Activated B cell treated with CpG ODN at 0.5 μM for 24 hours (primary cell): ENCODE measurements at regions of chr11 and their contacts with region 1.

Region 1: GRCh38 chr11:67401495-67402191 is at the start of gene PPP1CA:
- DNase-seq: peak; percentile 96
- ATAC-seq: peak; percentile 72
- H3K4me3 Mint-ChIP-seq: peak within 1 kb of the TSS; percentile 86
- H3K27ac Mint-ChIP-seq: peak within 1 kb of the TSS; percentile 91
- H3K4me1 Mint-ChIP-seq: peaks cover 77% of the 10 kb centered on the region
- H3K27me3 Mint-ChIP-seq: no peaks in the 10 kb centered on the region
- CTCF ChIP-seq: no peak
- total RNA-seq, gene PPP1CA: 349 and 354 TPM in 2 replicates

Region 2: DNA sequence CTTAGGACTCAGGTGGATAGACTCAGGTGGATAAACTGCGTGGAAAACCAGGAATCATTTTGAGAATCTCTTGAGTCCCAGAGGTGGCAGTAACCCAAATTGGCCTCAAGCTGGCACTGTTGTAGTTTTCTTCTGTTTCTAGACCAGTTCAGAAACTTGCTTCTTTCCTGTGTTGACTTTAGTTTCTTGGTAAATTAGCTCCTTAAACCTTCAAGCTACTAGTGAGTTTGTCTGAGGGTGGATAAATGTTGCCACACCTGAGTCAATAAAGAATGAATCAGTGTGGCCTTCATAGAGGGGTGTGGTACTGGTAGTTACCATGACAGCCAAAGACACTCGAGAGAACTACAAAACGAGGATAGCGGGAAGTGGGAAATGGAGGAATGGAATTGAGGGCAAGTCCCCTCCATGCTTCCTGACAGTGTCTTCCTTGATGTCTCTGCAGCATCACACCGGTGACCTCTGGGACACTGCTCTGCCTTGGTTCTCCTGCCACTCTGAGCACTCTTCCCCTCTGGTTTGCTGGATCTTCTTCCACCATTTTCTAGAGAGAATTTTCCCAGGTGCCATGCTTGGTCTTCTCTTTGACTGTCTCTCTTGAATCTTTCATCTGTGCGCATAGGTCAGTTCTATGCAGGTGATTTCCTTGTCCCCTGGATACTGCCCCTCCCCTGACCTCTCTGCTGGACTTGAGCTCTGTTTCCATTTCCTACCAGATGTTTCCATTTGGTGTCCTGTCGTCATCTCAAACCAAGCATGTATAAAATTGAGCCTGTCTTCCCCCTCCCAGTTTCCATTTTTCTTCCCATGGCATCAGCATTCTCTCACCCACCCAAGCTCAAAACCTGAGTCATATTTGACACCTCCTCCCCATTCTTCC is 55.5 kb before region 1 on chr11:
- CTCF ChIA-PET with region 1: interaction called, 8 read pairs
- POLR2A ChIA-PET with region 1: interaction called, 99 read pairs
- intact Hi-C with region 1: no loop called
- DNase-seq: no peak
- ATAC-seq: peak; percentile 46
- H3K4me3 Mint-ChIP-seq: no peak overlapping the region
- H3K27ac Mint-ChIP-seq: peak overlapping the region; percentile 88
- H3K4me1 Mint-ChIP-seq: peaks cover 71% of the 10 kb centered on the region
- H3K27me3 Mint-ChIP-seq: no peaks in the 10 kb centered on the region
- CTCF ChIP-seq: no peak

Region 3: DNA sequence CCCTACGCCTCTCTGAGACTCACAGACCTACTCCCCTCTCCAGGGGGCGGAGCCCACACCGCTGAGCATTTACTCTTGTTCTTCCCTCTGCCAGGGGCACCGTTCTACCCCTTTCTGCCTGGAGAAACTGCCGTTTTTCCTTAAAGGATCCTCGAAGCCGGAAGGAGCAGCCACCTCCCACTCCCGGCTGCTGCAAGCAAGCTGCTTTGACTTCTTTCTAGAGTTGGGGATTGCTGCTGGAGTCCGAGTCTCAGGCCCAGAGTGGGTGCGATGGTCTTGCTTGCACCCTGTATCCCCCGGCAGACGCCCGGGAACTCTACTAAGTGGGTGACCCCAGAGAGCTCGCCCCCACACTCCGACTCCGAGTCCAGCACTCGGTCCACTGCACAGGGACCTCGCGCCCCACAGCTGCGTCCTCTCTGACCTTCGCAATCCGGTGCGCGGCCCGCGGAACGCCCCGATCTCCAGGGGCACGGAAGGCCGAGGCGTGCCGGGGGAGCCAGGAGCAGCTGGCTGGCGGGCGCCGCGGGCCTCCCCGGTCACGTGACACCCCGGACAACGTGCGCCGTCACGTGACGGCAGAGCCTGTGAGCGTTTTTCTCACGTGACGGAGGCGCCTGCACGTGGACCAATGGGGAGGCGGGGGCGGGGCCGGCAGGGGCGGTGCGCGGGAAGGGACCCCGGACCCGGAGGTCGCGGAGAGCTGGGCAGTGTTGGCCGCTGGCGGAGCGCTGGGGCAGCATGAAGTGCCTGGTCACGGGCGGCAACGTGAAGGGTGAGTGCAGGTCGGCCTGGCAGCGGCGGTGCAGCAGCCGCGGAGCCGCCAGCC is 10.1 kb before region 1 on chr11 and contains the start of gene RAD9A:
- CTCF ChIA-PET with region 1: interaction called, 11 read pairs
- POLR2A ChIA-PET with region 1: interaction called, 100 read pairs
- intact Hi-C with region 1: loop called (anchors 1 kb)
- DNase-seq: peak; percentile 85
- ATAC-seq: peak; percentile 79
- H3K4me3 Mint-ChIP-seq: peak within 1 kb of the TSS; percentile 89
- H3K27ac Mint-ChIP-seq: peak within 1 kb of the TSS; percentile 80
- H3K4me1 Mint-ChIP-seq: peaks cover 40% of the 10 kb centered on the region
- H3K27me3 Mint-ChIP-seq: no peaks in the 10 kb centered on the region
- CTCF ChIP-seq: no peak
- total RNA-seq, gene RAD9A: 30.4 and 35.2 TPM in 2 replicates

Region 4: DNA sequence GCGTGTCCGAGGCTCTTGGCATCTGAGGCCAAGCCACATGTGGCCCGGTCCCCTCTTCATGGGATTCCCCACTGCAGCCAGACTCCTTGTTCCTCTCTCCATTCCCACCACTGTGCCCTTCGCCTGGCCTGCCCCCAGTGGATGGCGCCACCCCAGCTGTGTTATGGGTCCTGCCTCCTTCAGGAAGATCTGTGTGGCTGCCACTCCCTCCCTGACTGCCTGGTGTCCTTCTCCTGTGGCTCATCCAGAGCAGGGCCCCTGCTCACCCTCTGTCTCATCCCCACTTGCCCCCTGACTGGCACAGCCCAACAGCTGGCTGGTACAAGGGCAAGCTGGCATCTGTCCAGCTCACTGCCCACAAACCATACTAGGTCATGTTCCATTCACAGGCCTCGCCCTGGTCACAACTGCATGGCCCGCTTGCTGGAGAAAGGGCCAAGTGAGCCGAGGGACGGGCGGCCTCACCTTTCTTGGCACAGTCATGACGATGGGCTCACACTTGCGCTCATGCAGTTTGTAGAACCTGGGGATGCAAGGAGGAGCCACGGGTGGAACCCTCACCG is 37.8 kb after region 1 on chr11:
- CTCF ChIA-PET with region 1: interaction called, 25 read pairs
- POLR2A ChIA-PET with region 1: interaction called, 693 read pairs
- intact Hi-C with region 1: loop called (anchors 1 kb)
- DNase-seq: peak; percentile 26
- ATAC-seq: no peak
- H3K4me3 Mint-ChIP-seq: peak overlapping the region; percentile 96
- H3K27ac Mint-ChIP-seq: peak overlapping the region; percentile 88
- H3K4me1 Mint-ChIP-seq: peaks cover 76% of the 10 kb centered on the region
- H3K27me3 Mint-ChIP-seq: no peaks in the 10 kb centered on the region
- CTCF ChIP-seq: no peak

Region 5: GRCh38 chr11:67482825-67483798 is 81.5 kb after region 1 on chr11 and contains the start of gene AIP:
- CTCF ChIA-PET with region 1: interaction called, 9 read pairs
- POLR2A ChIA-PET with region 1: interaction called, 57 read pairs
- intact Hi-C with region 1: loop called (anchors 2 kb)
- DNase-seq: peak; percentile 87
- ATAC-seq: peak; percentile 85
- H3K4me3 Mint-ChIP-seq: peak within 1 kb of the TSS; percentile 93
- H3K27ac Mint-ChIP-seq: peak within 1 kb of the TSS; percentile 98
- H3K4me1 Mint-ChIP-seq: peaks cover 58% of the 10 kb centered on the region
- H3K27me3 Mint-ChIP-seq: no peaks in the 10 kb centered on the region
- CTCF ChIP-seq: no peak
- total RNA-seq, gene AIP: 108 and 114 TPM in 2 replicates

Region 6: DNA sequence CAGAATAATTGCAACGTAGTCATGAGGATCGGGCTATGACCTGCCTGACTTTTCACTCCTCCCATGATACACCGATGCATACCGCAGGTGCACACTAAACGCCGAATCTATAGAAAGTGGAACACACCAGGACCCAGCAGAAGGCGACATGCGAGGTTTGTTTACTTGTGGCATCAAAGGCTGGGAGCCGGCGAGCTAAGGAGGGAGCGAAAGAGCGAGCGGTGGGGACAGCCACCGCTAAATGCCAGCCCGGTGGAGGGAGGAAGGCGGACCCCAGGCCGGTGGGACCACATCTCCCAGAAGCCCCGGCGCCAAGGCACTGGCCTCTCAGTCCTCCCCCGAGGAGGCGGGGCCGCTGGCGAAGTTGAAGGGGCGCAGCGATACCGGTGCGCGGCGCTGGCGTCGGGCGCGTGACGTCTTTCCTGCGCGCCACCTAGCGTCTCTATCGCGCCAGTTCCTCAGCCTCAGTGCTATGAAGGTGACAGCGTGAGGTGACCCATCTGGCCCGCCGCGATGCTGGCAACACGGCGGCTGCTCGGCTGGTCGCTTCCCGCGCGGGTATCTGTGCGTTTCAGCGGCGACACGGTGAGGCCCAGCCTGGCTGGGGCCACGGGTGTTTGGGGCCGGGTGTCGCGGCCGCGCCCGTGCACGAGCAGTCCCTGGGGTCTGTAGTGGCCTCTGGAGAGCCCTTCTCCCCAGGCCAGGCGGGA is 205.0 kb after region 1 on chr11 and contains the start of gene NDUFV1:
- CTCF ChIA-PET with region 1: no interaction called
- POLR2A ChIA-PET with region 1: no interaction called
- intact Hi-C with region 1: loop called (anchors 5 kb)
- DNase-seq: peak; percentile 93
- ATAC-seq: peak; percentile 99
- H3K4me3 Mint-ChIP-seq: peak within 1 kb of the TSS; percentile 90
- H3K27ac Mint-ChIP-seq: peak within 1 kb of the TSS; percentile 73
- H3K4me1 Mint-ChIP-seq: peaks cover 24% of the 10 kb centered on the region
- H3K27me3 Mint-ChIP-seq: peaks cover 11% of the 10 kb centered on the region
- CTCF ChIP-seq: no peak
- total RNA-seq, gene NDUFV1: 207 and 221 TPM in 2 replicates